ENCODE measurements at regions of chrX and their contacts with region 1.

Region 1: DNA sequence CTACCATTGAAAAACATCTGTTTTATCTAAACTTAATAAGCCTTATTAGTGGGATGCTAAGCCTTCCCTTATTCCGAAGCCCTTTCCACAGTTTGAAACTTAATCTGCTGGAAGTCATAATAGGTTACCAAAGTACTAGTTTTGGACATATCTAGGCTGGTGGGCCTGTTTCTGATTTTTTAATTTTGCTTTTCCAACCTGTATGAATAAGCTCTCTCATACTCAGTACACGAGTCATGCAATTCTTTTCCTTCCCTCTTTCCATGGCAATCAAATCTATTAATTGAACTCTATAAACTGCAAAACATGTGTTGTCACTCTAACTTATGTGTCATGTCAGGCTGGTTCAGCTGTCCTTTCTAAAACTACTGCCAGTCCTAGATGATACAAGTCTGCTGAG is 91.0 kb downstream of the AMMECR1 start:
- DNase-seq: no peak
- H3K4me3 Mint-ChIP-seq: no peak overlapping the region
- H3K27ac Mint-ChIP-seq: no peak overlapping the region
- H3K4me1 Mint-ChIP-seq: peaks cover 24% of the 10 kb centered on the region
- H3K27me3 Mint-ChIP-seq: no peaks in the 10 kb centered on the region

Region 2: DNA sequence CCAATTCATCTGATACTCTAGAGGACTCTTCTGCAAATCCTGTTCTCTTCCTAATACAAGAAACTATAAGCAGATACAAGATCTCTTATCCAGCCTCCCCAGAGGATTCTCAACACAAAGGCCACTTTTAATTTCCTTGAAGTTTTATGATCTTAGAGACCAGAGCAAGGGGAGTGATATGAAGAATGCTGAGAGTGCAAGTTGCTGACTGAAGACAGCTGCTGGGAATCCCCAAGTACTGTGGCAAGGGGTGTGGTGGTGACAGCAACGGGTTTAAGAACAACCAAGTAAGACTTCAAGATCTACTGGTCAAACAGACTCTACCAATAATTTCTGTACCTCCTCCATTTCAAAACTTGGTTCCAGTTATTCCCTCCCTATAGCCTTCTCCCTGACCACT is 84.0 kb after region 1 on chrX:
- intact Hi-C with region 1: loop called (anchors 5 kb)
- DNase-seq: peak; percentile 75
- H3K4me3 Mint-ChIP-seq: peak overlapping the region; percentile 73
- H3K27ac Mint-ChIP-seq: peak overlapping the region; percentile 78
- H3K4me1 Mint-ChIP-seq: peaks cover 35% of the 10 kb centered on the region
- H3K27me3 Mint-ChIP-seq: no peaks in the 10 kb centered on the region

Measured in activated CD4-positive, alpha-beta T cell treated with anti-CD3 and anti-CD28 coated beads, Interleukin-2, amount 10 ng/mL, durations not matched to agents 24 days and 14 days (primary cell).